ENCODE measurements at regions of chr1 and their contacts with region 1.

Region 1: DNA sequence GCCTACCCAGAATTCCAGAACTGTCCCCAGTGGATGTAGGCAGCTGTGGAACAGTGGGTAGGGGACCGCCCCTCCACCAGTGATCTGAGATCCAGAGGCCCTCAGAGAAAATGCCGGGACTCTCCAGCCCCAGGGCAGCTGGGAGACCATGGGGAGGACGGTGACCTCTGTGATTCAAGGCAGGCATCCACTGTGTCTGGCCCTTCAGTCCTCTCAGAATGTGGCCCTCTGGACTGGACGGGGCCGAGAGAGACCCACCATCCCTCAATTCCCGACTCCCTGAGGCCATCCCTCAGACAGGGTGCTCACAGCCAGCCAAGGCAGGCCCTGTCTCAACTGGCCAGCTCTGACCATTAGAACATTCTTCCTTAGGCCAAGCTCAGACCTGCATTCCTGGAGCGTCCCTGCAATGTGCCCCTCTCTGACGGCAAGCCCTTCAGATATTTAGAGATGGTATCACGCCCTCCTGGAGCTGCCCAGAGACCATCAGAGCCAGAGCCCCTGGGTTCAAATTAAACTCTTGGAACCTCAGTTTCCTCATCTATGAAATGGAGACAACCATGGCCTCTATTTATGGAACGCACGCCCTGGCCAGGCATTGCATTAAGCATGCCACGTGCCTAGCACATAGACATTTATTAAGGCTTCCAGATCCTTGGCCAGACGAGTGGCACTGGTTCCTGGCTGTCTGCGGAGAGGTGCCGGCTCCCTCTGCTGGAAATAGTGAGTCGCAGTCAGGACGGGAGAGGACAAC is 9.6 kb upstream of the EPS8L3 start:
- DNase-seq: peak; percentile 82
- H3K4me3 Mint-ChIP-seq: no peak overlapping the region
- H3K27ac Mint-ChIP-seq: no peak overlapping the region
- H3K4me1 Mint-ChIP-seq: peaks cover 11% of the 10 kb centered on the region
- H3K27me3 Mint-ChIP-seq: peaks cover 52% of the 10 kb centered on the region

Region 2: GRCh38 chr1:109548321-109549267 is 224.7 kb before region 1 on chr1 and contains the start of gene GNAI3:
- CTCF ChIA-PET with region 1: interaction called, 106 read pairs
- DNase-seq: peak; percentile 99
- H3K4me3 Mint-ChIP-seq: peak within 1 kb of the TSS; percentile 87
- H3K27ac Mint-ChIP-seq: peak within 1 kb of the TSS; percentile 98
- H3K4me1 Mint-ChIP-seq: peaks cover 47% of the 10 kb centered on the region
- H3K27me3 Mint-ChIP-seq: peaks cover 5% of the 10 kb centered on the region

Region 3: DNA sequence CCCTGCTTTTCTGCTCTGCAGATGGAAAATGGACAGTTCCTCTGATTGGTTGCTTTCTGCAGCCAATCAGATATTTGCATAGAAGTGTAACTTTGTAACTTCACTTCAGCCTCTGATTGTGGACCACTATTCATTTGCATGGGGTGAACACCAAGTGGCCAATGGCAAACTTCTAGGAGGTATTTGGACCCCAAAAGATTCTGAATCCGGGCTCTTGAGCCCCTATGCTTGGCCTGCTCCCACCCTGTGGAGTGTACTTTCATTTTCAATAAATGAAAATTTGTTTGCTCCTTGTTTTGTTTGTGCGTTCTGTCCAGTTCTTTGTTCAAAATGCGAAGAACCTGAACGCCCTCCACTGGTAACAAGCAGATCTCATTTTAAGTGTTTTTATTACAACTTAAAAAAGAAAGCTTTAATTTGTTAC is 123.8 kb before region 1 on chr1:
- CTCF ChIA-PET with region 1: interaction called, 326 read pairs
- DNase-seq: no peak
- H3K4me3 Mint-ChIP-seq: no peak overlapping the region
- H3K27ac Mint-ChIP-seq: no peak overlapping the region
- H3K4me1 Mint-ChIP-seq: peaks cover 2% of the 10 kb centered on the region
- H3K27me3 Mint-ChIP-seq: peaks cover 35% of the 10 kb centered on the region

Region 4: DNA sequence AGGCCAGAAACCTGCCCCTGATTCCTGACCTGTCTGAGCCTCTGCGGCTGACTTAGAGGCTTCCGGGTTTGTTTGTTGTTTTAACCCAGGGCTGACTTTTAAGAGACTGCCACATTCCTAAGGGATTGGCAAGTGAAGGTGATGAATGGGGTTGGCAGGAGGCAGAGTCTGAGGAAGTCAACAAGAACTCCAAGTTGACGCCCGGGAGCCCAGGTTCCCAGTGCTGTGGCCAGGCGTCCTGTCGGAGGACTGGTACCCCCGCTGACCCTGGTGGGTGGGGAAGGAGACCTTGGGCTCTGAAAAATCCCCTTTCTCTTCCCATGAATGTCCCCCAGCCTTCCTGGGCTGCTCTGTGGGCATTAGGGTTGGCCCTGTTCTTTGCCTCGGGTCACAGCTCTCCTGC is 10.1 kb after region 1 on chr1:
- CTCF ChIA-PET with region 1: interaction called, 42 read pairs
- DNase-seq: no peak
- H3K4me3 Mint-ChIP-seq: no peak overlapping the region
- H3K27ac Mint-ChIP-seq: no peak overlapping the region
- H3K4me1 Mint-ChIP-seq: peaks cover 19% of the 10 kb centered on the region
- H3K27me3 Mint-ChIP-seq: peaks cover 8% of the 10 kb centered on the region

Region 5: GRCh38 chr1:109790735-109791494 is 17.6 kb after region 1 on chr1:
- CTCF ChIA-PET with region 1: interaction called, 42 read pairs
- DNase-seq: peak; percentile 88
- H3K4me3 Mint-ChIP-seq: no peak overlapping the region
- H3K27ac Mint-ChIP-seq: peak overlapping the region; percentile 91
- H3K4me1 Mint-ChIP-seq: peaks cover 77% of the 10 kb centered on the region
- H3K27me3 Mint-ChIP-seq: peaks cover 3% of the 10 kb centered on the region

Region 6: GRCh38 chr1:110011527-110012041 is 238.3 kb after region 1 on chr1:
- CTCF ChIA-PET with region 1: interaction called, 31 read pairs
- DNase-seq: peak; percentile 63
- H3K4me3 Mint-ChIP-seq: no peak overlapping the region
- H3K27ac Mint-ChIP-seq: peak overlapping the region; percentile 43
- H3K4me1 Mint-ChIP-seq: peaks cover 3% of the 10 kb centered on the region
- H3K27me3 Mint-ChIP-seq: no peaks in the 10 kb centered on the region

Measured in activated naive CD4-positive, alpha-beta T cell treated with anti-CD3 and anti-CD28 coated beads, Interleukin-2, amount 10 ng/mL, durations not matched to agents 7 days and 5 days (primary cell).